ENCODE measurements at regions of chr12 and their contacts with region 1.

Region 1: GRCh38 chr12:48859607-48860006 is 6.1 kb downstream of the RND1 start:
- DNase-seq: no peak
- ATAC-seq: no peak
- H3K4me3 ChIP-seq: no peak overlapping the region
- H3K4me3 Mint-ChIP-seq: no peak overlapping the region
- H3K27ac ChIP-seq: no peak overlapping the region
- H3K27ac Mint-ChIP-seq: no peak overlapping the region
- H3K4me1 ChIP-seq: peaks cover 0 to 6% of the 10 kb centered on the region in 2 experiments
- H3K4me1 Mint-ChIP-seq: peaks cover 9 to 10% (median 9%) of the 10 kb centered on the region in 3 donors
- H3K27me3 ChIP-seq: peaks cover 0 to 37% of the 10 kb centered on the region in 2 experiments
- H3K27me3 Mint-ChIP-seq: peaks cover 13 to 30% of the 10 kb centered on the region in 2 donors

Region 2: DNA sequence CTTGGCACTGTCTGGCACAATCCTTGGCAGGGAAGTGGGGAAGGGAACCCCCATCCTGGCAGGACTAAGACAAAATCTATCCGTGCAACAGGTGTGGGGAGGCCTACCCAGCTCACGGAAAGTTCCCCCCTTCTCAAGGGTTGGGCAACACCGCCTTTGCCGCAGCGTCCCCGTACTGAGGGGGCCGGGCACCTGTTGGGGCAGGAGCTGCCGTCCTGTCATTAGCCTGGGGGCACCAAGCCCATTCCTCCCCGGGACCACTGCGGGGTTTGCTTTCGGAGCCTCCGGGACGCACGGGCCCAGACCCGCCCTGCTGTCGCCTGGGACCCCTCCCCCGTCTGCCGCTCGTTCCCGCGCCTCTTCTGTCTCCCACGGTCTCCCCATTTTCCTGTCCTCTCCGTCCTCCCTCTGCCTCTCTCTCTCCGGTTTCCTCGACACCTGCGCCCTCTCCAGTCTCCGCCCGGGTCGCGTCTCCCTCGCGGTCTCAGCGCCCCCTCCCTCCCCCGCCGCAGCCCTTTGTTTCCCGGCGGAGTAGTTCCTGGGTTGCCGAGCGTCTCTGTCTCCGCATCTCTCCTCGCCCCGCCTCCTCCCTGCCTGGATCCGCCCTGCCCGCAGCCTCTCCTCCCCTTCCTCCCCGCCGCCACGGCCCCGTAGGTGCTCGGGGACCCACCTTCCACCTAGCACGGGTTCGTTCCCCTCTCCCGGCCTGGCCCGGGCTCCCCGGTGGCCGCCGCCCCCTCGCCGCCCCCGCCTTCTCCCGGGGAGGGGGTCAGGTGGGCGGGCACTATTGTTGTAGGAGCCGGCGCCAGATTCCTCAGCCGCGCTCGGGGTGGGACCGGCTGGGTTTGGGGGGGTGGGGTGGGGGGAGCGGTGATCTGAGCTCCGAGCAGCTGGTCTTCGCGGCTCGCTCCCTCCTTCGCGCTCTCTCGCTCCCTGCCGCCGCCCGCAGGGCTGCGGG is 41.5 kb before region 1 on chr12 and contains the start of gene CACNB3:
- CTCF ChIA-PET with region 1: no interaction called
- POLR2A ChIA-PET with region 1: no interaction called
- DNase-seq: peak; percentile 57 to 83 (median 74)
- ATAC-seq: peak; percentile 71 to 82 (median 76)
- H3K4me3 ChIP-seq: peak within 1 kb of the TSS; percentile 58 to 59
- H3K4me3 Mint-ChIP-seq: peak within 1 kb of the TSS; percentile 86 to 91 (median 89)
- H3K27ac ChIP-seq: no peak within 1 kb of the TSS
- H3K27ac Mint-ChIP-seq: peak within 1 kb of the TSS; percentile 23 to 58
- H3K4me1 ChIP-seq: peaks cover 8 to 49% of the 10 kb centered on the region in 2 experiments
- H3K4me1 Mint-ChIP-seq: peaks cover 31 to 41% (median 37%) of the 10 kb centered on the region in 3 donors
- H3K27me3 ChIP-seq: peaks cover 0 to 17% of the 10 kb centered on the region in 2 experiments
- H3K27me3 Mint-ChIP-seq: peaks cover 0 to 4% of the 10 kb centered on the region in 2 donors
- total RNA-seq, gene CACNB3: 4.3 to 12.4 (median 8.9) TPM

Region 3: GRCh38 chr12:48875944-48876515 is 16.4 kb after region 1 on chr12:
- CTCF ChIA-PET with region 1: no interaction called
- POLR2A ChIA-PET with region 1: no interaction called
- DNase-seq: no peak
- ATAC-seq: no peak
- H3K4me3 ChIP-seq: no peak overlapping the region
- H3K4me3 Mint-ChIP-seq: no peak overlapping the region
- H3K27ac ChIP-seq: no peak overlapping the region
- H3K27ac Mint-ChIP-seq: no peak overlapping the region
- H3K4me1 ChIP-seq: no peaks in the 10 kb centered on the region
- H3K4me1 Mint-ChIP-seq: no peaks in the 10 kb centered on the region
- H3K27me3 ChIP-seq: peaks cover 0 to 20% of the 10 kb centered on the region in 2 experiments
- H3K27me3 Mint-ChIP-seq: peaks cover 12 to 13% of the 10 kb centered on the region in 2 donors

Region 4: DNA sequence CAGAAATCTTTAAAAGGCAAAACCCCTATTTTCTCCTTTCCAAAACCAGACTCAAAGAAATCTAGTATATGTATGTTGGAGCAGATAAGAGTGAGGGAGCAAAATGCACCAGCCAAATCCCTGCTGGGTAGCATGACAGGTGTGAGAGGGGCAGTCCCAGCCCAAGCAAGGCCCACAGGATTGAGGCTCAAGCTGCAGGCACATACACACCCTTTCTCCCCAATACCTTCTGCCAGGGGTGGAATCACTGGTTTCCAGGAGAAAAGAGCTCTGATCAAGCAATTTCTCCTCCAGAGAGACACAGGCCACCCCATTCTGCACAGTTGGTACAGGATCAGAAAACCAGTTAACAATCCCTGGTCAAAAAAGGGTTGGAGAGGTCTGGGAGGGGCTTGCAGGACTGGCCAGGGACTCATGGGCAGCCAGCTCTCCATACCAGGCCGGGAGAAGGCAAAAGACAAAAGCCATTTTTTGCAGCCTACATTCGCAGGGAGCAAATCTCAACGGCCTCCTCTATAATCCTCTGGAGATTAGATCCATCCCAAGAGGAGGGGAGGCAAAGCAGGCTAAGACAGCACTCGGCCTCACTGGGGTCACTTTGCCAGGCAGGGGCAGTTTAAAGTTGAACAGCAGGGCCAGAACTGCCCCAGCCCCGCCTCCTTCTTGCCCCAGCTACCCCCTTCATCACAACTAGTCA is 198.9 kb after region 1 on chr12:
- CTCF ChIA-PET with region 1: interaction called in 1 of 2 experiments, 11 read pairs
- POLR2A ChIA-PET with region 1: interaction called in 1 of 2 experiments, 4 read pairs
- DNase-seq: no peak
- ATAC-seq: no peak
- H3K4me3 ChIP-seq: peak overlapping the region; percentile 92 to 99
- H3K4me3 Mint-ChIP-seq: peak overlapping the region; percentile 90 to 94 (median 94)
- H3K27ac ChIP-seq: peak overlapping the region; percentile 49
- H3K27ac Mint-ChIP-seq: peak overlapping the region; percentile 84 to 90
- H3K4me1 ChIP-seq: peaks cover 42 to 65% of the 10 kb centered on the region in 2 experiments
- H3K4me1 Mint-ChIP-seq: peaks cover 54 to 64% (median 60%) of the 10 kb centered on the region in 3 donors
- H3K27me3 ChIP-seq: peaks cover 0 to 2% of the 10 kb centered on the region in 2 experiments
- H3K27me3 Mint-ChIP-seq: no peaks in the 10 kb centered on the region

Measured in T-cell (primary cell).